ENCODE measurements at regions of chr16 and their contacts with region 1.

Region 1: DNA sequence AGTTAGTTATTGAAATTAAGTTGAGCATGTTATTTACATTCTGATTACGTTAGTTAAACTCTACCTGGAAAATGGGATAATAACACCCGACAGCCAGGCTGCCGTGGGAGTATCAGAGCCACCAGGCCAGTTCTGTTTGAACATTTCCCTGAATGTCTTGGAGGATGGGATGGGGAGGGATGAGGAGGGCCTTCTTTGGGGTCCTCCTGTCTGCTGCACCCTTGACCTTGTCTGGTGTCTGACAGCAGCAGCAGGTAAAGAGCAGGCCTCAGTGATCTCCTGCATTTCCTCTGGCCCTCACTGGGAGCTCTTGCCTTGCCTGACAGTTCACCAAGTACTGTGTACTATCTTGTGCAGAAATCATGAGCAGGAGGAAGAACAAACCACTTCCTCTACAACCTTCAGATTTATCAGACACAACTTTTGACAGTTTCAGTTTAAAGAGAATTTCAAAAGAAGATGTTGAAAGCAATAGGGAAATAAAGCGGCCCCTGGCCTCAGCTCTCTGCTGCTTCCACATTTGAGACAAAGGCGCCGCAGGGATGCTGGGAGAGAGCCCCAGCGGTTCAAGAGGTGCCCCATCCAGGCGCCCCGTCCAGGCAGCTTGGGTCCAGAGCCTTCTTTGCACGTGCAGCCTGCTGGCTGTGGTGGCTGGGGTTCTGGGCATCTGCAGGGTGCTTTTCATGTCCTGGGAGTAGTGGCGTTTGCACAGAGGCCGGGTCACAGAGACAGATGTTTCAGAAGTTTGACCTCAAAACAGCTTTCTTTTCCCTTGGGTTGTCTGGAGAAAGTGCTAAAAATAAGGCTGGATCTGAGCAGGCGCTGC is 25.3 kb downstream of the CMIP start:
- DNase-seq: peak in 7 of 9 experiments; percentile 19 to 80 (median 47)
- ATAC-seq: peak; percentile 88
- H3K4me3 ChIP-seq: peak overlapping the region; percentile 28 to 36
- H3K4me3 Mint-ChIP-seq: peak overlapping the region; percentile 64
- H3K27ac ChIP-seq: peak overlapping the region; percentile 43 to 73
- H3K27ac Mint-ChIP-seq: peak overlapping the region; percentile 91
- H3K4me1 ChIP-seq: peaks cover 67% of the 10 kb centered on the region
- H3K4me1 Mint-ChIP-seq: peaks cover 77% of the 10 kb centered on the region
- H3K27me3 ChIP-seq: no peaks in the 10 kb centered on the region
- H3K27me3 Mint-ChIP-seq: no peaks in the 10 kb centered on the region
- CTCF ChIP-seq: no peak

Region 2: DNA sequence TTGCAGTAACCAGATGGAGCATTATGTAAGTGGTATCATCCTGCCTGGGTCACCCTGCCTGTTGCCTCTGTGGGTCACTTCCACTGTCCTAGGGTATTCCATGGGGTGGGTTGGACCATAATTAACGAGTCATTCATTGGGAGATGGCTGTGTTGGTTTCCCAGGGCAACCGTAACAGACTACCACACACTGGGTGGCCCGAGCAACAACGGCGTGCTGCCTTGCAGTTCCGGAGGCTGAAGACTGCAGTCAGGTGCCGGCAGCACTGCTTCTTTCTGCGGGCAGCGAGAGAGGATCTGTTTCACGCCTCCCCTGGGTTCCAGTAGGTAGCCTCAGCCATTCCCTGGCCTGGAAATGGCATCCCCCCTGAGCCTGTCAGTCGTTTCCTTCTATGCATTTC is 54.2 kb before region 1 on chr16:
- CTCF ChIA-PET with region 1: no interaction called
- POLR2A ChIA-PET with region 1: no interaction called
- intact Hi-C with region 1: loop called in 1 of 2 experiments (anchors 5 kb)
- DNase-seq: no peak
- ATAC-seq: no peak
- H3K4me3 ChIP-seq: no peak overlapping the region
- H3K4me3 Mint-ChIP-seq: no peak overlapping the region
- H3K27ac ChIP-seq: no peak overlapping the region
- H3K27ac Mint-ChIP-seq: no peak overlapping the region
- H3K4me1 ChIP-seq: no peaks in the 10 kb centered on the region
- H3K4me1 Mint-ChIP-seq: no peaks in the 10 kb centered on the region
- H3K27me3 ChIP-seq: no peaks in the 10 kb centered on the region
- H3K27me3 Mint-ChIP-seq: no peaks in the 10 kb centered on the region
- CTCF ChIP-seq: no peak

Region 3: DNA sequence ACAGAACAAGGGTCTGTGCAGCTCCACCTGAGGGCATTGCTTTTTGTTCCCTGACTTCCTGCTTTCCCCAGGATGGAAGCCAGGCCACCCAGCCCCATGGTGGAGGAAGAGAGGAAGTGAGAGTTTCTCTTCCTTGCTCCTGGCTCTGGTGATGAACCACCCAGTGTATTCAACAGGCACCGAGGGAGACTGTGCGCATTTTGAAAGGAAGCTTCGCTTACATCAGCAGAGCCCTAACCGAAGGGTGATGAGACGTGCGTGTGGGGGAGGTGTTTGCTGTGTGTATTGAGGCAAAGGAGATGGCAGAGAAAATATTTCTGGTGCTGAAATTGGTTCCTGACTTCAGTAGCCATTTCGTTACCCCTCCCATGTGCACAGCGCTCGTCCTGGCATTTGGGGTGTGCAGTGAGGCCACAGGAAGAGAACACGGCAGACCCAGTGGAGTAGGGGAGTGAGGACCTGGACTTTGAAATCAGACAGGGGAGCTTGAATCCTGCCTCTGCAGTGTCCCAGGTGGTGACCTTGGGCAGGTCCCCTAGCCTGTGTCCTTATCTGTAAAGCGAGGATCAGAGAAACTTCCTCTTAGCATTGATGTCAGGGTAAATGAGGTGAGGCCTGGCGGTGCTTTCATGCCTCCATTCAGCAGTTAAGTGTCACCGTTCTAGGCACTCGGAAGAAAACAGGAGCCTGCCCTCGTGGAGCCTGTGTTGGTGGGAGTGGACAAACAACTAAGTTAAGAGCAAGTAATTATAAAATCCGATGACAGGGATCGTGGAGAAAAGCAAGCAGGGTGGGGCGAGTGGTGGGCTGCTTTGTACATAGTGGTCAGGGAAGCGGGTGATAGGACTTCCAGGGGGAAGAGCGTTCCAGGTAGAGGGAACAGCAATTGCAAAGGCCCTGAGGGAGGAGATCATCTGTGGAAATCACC is 17.9 kb before region 1 on chr16:
- CTCF ChIA-PET with region 1: no interaction called
- POLR2A ChIA-PET with region 1: interaction called, 18 read pairs
- intact Hi-C with region 1: loop called in 1 of 2 experiments (anchors 2 kb)
- DNase-seq: peak in 6 of 9 experiments; percentile 21 to 76 (median 51)
- ATAC-seq: peak; percentile 91
- H3K4me3 ChIP-seq: no peak overlapping the region
- H3K4me3 Mint-ChIP-seq: peak overlapping the region; percentile 64
- H3K27ac ChIP-seq: peak overlapping the region in 1 of 2 experiments; percentile 36
- H3K27ac Mint-ChIP-seq: peak overlapping the region; percentile 87
- H3K4me1 ChIP-seq: peaks cover 59% of the 10 kb centered on the region
- H3K4me1 Mint-ChIP-seq: peaks cover 86% of the 10 kb centered on the region
- H3K27me3 ChIP-seq: no peaks in the 10 kb centered on the region
- H3K27me3 Mint-ChIP-seq: no peaks in the 10 kb centered on the region
- CTCF ChIP-seq: no peak